ENCODE measurements at regions of chr2 and their contacts with region 1.

Region 1: GRCh38 chr2:54899576-54900200 is 150.6 kb downstream of the RTN4 start:
- DNase-seq: no peak
- H3K4me3 Mint-ChIP-seq: no peak overlapping the region
- H3K27ac Mint-ChIP-seq: no peak overlapping the region
- H3K4me1 Mint-ChIP-seq: peaks cover 21% of the 10 kb centered on the region
- H3K27me3 Mint-ChIP-seq: no peaks in the 10 kb centered on the region

Region 2: DNA sequence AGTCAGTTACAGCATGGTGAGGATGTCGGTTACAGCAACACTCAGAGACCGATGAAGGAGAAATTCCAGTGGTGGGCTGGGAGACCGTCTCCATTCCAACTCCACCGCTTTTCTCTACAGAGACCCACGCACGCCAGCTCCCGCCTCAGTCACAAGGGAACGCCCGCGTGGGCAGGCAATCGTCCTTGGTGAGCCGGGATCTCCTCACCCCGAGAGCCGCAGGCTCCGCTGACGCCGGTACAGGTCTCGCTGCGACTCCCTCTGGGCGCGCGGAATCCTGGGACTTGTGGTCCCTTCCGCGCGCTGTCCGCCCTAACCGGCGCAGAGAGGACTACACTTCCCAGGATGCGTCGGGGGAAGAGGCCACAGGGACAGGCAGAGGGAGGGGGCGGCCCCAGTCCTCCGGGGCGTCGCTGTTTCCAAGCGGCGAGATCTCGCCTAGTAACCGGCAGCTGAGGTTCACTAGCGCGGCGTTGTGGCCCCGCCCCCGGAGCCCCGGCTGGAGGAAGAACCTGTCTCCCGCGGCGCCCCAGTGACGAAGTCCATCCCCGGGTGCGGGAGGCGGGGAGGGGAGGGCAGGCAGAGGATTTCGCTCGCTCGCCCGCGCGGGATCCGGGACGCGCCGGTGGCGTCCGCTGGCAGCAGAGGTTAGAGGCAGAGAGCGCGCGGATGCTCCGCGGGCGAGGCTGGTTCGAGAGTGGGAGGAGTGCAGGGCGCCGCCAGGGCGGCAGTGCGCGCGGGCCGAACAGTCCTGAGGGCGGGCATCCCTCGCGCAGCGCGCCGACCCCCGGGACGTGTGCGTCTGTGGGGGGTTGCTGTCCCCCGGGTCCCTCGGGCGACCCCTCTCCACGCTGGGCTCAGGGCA is 176.3 kb before region 1 on chr2 and contains the start of gene EML6:
- CTCF ChIA-PET with region 1: no interaction called
- POLR2A ChIA-PET with region 1: no interaction called
- DNase-seq: peak; percentile 99
- H3K4me3 Mint-ChIP-seq: peak within 1 kb of the TSS; percentile 86
- H3K27ac Mint-ChIP-seq: peak within 1 kb of the TSS; percentile 68
- H3K4me1 Mint-ChIP-seq: peaks cover 26% of the 10 kb centered on the region
- H3K27me3 Mint-ChIP-seq: peaks cover 59% of the 10 kb centered on the region
- total RNA-seq, gene EML6: 0.95 to 1.8 TPM

Region 3: DNA sequence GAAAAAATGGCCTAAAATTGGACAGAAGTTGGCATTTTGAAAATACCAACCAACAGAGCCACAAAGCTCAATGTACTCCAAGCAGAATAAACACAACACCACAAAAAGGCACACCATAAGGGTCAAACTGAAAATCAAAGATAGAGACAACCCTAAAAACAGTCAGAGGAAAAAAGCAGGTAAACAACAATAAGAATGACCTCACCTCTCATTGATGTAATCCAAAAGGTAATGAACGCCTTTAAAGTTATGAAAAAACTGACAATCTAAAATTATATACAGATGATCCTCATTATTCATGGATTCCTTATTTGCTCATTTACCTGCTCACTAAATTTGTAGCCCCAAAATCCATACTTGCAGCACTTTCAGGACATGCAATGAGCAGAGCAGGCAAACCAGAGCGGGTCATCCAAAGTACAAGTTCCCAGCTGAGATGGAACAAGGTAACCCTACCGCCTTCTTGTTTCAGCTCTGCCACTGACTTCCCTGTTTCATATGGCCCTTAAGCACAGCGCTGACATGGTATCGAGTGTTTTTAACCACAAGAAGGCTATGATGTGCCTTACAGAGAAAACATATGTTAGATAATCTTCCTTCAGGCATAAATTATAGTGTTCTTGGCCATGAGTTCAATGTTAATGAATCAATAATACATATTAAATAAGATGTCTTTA is 133.5 kb after region 1 on chr2:
- CTCF ChIA-PET with region 1: no interaction called
- POLR2A ChIA-PET with region 1: no interaction called
- DNase-seq: no peak
- H3K4me3 Mint-ChIP-seq: no peak overlapping the region
- H3K27ac Mint-ChIP-seq: no peak overlapping the region
- H3K4me1 Mint-ChIP-seq: peaks cover 22% of the 10 kb centered on the region
- H3K27me3 Mint-ChIP-seq: no peaks in the 10 kb centered on the region

Region 4: GRCh38 chr2:55168221-55169154 is 268.8 kb after region 1 on chr2:
- CTCF ChIA-PET with region 1: interaction called, 18 read pairs
- POLR2A ChIA-PET with region 1: no interaction called
- DNase-seq: peak; percentile 32
- H3K4me3 Mint-ChIP-seq: no peak overlapping the region
- H3K27ac Mint-ChIP-seq: no peak overlapping the region
- H3K4me1 Mint-ChIP-seq: no peaks in the 10 kb centered on the region
- H3K27me3 Mint-ChIP-seq: no peaks in the 10 kb centered on the region

Region 5: GRCh38 chr2:55175254-55176025 is 275.8 kb after region 1 on chr2:
- CTCF ChIA-PET with region 1: interaction called, 13 read pairs
- POLR2A ChIA-PET with region 1: no interaction called
- DNase-seq: no peak
- H3K4me3 Mint-ChIP-seq: no peak overlapping the region
- H3K27ac Mint-ChIP-seq: no peak overlapping the region
- H3K4me1 Mint-ChIP-seq: peaks cover 2% of the 10 kb centered on the region
- H3K27me3 Mint-ChIP-seq: no peaks in the 10 kb centered on the region